ENCODE measurements at regions of chr10 and their contacts with region 1.

Region 1: GRCh38 chr10:33808475-33808874 is 474.0 kb upstream of the NRP1 start:
- DNase-seq: no peak
- ATAC-seq: no peak
- H3K4me3 ChIP-seq: no peak overlapping the region
- H3K27ac ChIP-seq: no peak overlapping the region
- H3K4me1 ChIP-seq: no peaks in the 10 kb centered on the region
- H3K27me3 ChIP-seq: no peaks in the 10 kb centered on the region
- CTCF ChIP-seq: no peak
- EP300 ChIP-seq: no peak
- POLR2A ChIP-seq: no peak
- RAD21 ChIP-seq: no peak

Region 2: GRCh38 chr10:33819206-33819605 is 10.7 kb after region 1 on chr10:
- CTCF ChIA-PET with region 1: interaction called, 3 read pairs
- POLR2A ChIA-PET with region 1: no interaction called
- RAD21 ChIA-PET with region 1: interaction called, 6 read pairs
- SMC1A ChIA-PET with region 1: interaction called, 16 read pairs
- in situ Hi-C with region 1: no loop called
- intact Hi-C with region 1: no loop called
- DNase-seq: no peak
- ATAC-seq: no peak; the same call in 2 of the 3 replicates
- H3K4me3 ChIP-seq: no peak overlapping the region
- H3K27ac ChIP-seq: no peak overlapping the region
- H3K4me1 ChIP-seq: no peaks in the 10 kb centered on the region
- H3K27me3 ChIP-seq: no peaks in the 10 kb centered on the region
- CTCF ChIP-seq: no peak
- EP300 ChIP-seq: no peak
- POLR2A ChIP-seq: no peak
- RAD21 ChIP-seq: no peak

Region 3: DNA sequence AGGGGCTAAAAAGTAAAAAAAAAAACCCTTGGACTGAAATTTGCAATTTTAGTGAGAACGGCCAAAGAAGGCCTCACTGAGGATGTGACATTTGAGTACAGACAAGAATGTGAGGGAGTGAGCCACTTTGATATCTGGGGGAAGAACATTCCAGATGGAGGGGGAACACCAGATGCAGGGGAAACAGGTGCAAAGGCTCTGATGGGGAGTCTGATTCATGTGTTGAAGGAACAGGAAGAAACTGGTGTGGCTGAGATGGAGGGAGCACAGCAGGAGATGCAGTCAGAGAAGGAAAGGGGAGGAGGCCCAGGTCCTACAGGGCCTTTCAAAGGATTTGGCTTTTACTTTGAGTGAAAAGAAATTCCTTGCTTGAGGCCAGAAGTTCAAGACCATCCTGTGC is 141.7 kb after region 1 on chr10:
- CTCF ChIA-PET with region 1: no interaction called
- POLR2A ChIA-PET with region 1: no interaction called
- RAD21 ChIA-PET with region 1: no interaction called
- SMC1A ChIA-PET with region 1: no interaction called
- in situ Hi-C with region 1: no loop called
- intact Hi-C with region 1: no loop called
- DNase-seq: no peak
- ATAC-seq: no peak
- H3K4me3 ChIP-seq: no peak overlapping the region
- H3K27ac ChIP-seq: no peak overlapping the region
- H3K4me1 ChIP-seq: no peaks in the 10 kb centered on the region
- H3K27me3 ChIP-seq: no peaks in the 10 kb centered on the region
- CTCF ChIP-seq: no peak
- EP300 ChIP-seq: no peak
- POLR2A ChIP-seq: no peak
- RAD21 ChIP-seq: no peak

Measured in GM12878 (cell line).